Left lung (tissue), 14 donors: ENCODE measurements at regions of chr9 and their contacts with region 1.

Region 1: DNA sequence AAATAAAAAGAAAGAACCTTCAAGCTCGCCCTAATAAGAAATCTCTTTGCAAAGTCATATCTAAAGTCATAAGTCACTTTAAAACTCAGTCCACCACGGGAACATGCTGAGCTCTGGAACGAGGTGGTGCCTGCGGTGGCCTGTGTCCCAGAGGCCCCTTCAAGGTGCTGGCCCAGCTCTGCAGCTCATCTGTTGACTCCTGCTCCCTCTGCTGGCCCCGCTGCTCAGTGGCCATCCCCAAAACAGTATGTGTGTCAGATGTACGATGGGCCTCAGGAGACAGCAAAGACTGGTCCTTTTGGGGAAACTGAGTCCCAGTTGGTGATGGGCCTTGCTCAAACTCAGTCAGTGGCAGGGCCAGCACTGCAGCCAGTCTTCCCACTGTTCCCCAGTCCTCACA is 22.8 kb upstream of the FOXB2 start:
- DNase-seq: no peak
- ATAC-seq: peak; percentile 55
- H3K4me3 ChIP-seq: no peak overlapping the region
- H3K27ac ChIP-seq: no peak overlapping the region
- H3K4me1 ChIP-seq: no peaks in the 10 kb centered on the region
- H3K27me3 ChIP-seq: peaks cover 0 to 24% of the 10 kb centered on the region in 2 donors
- CTCF ChIP-seq: peak in 1 of 2 donors; percentile 21

Region 2: GRCh38 chr9:76662476-76663281 is 334.0 kb before region 1 on chr9:
- intact Hi-C with region 1: no loop called
- DNase-seq: no peak
- ATAC-seq: no peak
- H3K4me3 ChIP-seq: no peak overlapping the region
- H3K27ac ChIP-seq: peak overlapping the region in 1 of 2 donors; percentile 58
- H3K4me1 ChIP-seq: peaks cover 0 to 24% of the 10 kb centered on the region in 2 donors
- H3K27me3 ChIP-seq: no peaks in the 10 kb centered on the region
- CTCF ChIP-seq: no peak

Region 3: GRCh38 chr9:76810377-76810957 is 186.2 kb before region 1 on chr9:
- intact Hi-C with region 1: loop called in 1 of 2 experiments (anchors 10 kb)
- DNase-seq: peak in 2 of 4 donors; percentile 17 to 36
- ATAC-seq: peak; percentile 84
- H3K4me3 ChIP-seq: no peak overlapping the region
- H3K27ac ChIP-seq: no peak overlapping the region
- H3K4me1 ChIP-seq: no peaks in the 10 kb centered on the region
- H3K27me3 ChIP-seq: peaks cover 0 to 12% of the 10 kb centered on the region in 2 donors
- CTCF ChIP-seq: peak; percentile 55 to 59